ENCODE measurements at regions of chr4 and their contacts with region 1.

Region 1: GRCh38 chr4:169757575-169758184 is at the start of gene HPF1:
- DNase-seq: peak; percentile 85
- ATAC-seq: peak; percentile 95
- H3K4me3 Mint-ChIP-seq: peak within 1 kb of the TSS; percentile 92
- H3K27ac Mint-ChIP-seq: peak within 1 kb of the TSS; percentile 68
- H3K4me1 Mint-ChIP-seq: peaks cover 23% of the 10 kb centered on the region
- H3K27me3 Mint-ChIP-seq: no peaks in the 10 kb centered on the region
- CTCF ChIP-seq: no peak
- total RNA-seq, gene HPF1: 17.9 and 19.5 TPM in 2 replicates

Region 2: DNA sequence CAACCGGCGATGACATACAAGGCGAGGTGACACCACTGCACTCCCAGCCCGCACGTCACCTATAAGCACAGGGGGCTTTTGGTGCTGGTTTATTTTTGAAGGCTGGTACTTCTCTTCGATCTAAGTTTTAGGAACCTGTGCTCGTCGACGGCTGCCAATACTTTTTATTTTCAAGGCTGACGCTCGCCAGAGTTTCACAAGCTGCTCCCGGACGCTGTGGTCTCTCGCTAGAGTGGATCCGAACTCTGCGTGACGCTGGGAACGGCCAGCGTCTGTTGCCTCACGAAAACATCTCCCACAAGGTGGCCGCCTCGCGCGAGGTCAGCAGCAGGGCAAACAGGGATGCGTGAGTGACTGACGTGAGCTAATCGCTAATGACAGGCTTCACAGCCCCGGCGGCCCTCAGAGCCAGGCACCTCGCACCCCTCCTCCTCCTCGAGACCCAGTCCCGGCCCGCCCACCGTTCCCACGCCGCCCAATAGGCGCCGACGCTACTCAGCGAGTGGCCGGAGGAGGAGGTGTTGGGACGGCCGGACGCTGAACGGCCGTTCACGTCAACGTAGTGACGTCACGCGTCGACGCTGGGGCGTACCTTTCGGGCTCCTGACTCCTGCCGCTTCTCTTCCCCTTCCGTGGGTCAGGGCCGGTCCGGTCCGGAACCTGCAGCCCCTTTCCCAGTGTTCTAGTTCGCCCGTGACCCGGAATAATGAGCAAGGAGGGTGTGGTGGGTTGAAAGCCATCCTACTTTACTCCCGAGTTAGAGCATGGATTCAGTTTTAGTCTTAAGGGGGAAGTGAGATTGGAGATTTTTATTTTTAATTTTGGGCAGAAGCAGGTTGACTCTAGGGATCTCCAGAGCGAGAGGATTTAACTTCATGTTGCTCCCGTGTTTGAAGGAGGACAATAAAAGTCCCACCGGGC is 137.5 kb before region 1 on chr4 and contains the start of gene CLCN3:
- CTCF ChIA-PET with region 1: no interaction called
- POLR2A ChIA-PET with region 1: interaction called, 5 read pairs
- intact Hi-C with region 1: loop called (anchors 1 kb)
- DNase-seq: peak; percentile 92
- ATAC-seq: peak; percentile 93
- H3K4me3 Mint-ChIP-seq: peak within 1 kb of the TSS; percentile 100
- H3K27ac Mint-ChIP-seq: peak within 1 kb of the TSS; percentile 99
- H3K4me1 Mint-ChIP-seq: peaks cover 41% of the 10 kb centered on the region
- H3K27me3 Mint-ChIP-seq: no peaks in the 10 kb centered on the region
- CTCF ChIP-seq: no peak
- total RNA-seq, gene CLCN3: 23.0 and 28.6 TPM in 2 replicates

Region 3: DNA sequence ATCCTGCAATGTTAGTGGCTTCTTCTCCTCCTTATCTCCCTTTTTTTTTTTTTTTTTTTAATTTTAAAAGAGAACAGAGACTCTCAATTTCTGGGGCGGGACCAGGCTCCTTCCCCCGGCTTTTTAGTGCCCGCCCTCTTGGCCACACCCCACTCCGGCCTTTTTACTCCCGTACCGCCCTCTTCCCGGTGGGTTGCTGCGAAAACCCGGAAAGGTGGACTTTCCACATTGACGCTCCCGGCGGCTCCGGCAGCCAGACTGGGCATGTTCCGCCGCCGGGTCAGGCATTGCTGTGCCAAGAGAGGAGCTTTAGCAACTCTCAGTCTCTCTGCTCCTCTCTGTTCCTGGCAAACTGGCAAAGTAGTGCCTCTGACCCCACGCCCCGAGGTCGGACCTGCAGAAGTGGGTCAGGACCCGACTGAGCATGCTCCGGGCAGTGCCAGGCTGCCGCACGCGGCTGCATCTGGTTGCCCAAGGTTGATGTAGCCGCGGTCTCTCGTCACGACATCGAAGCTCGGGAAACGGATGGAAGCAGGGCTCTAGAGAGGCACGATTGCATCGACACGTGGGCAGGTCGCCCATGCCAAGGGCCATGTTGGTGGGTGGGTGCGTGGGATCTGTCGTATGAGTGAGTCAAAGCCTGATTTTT is 269.6 kb after region 1 on chr4:
- CTCF ChIA-PET with region 1: no interaction called
- POLR2A ChIA-PET with region 1: no interaction called
- intact Hi-C with region 1: loop called (anchors 1 kb)
- DNase-seq: peak; percentile 86
- ATAC-seq: peak; percentile 76
- H3K4me3 Mint-ChIP-seq: peak overlapping the region; percentile 89
- H3K27ac Mint-ChIP-seq: peak overlapping the region; percentile 47
- H3K4me1 Mint-ChIP-seq: peaks cover 13% of the 10 kb centered on the region
- H3K27me3 Mint-ChIP-seq: peaks cover 21% of the 10 kb centered on the region
- CTCF ChIP-seq: no peak

Region 4: DNA sequence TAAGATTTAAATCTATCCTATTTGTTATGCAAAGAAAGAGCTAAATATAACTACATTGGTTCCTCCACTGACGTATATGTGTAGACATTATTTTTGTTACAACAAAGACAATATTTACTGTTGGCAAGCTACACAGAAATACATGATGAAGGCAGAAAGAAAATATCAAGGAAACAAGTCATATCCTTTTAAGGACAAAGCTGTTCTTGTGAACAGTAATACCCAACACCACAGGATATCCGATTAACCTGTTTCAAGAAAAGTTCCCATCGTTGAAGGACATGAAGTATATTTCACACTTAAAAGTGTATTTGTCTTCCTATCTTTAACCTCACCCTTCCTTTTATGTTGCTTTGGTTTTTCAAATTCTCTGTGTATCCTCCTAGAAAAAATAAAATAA is 567.9 kb after region 1 on chr4:
- CTCF ChIA-PET with region 1: no interaction called
- POLR2A ChIA-PET with region 1: no interaction called
- intact Hi-C with region 1: no loop called
- DNase-seq: no peak
- ATAC-seq: no peak
- H3K4me3 Mint-ChIP-seq: no peak overlapping the region
- H3K27ac Mint-ChIP-seq: no peak overlapping the region
- H3K4me1 Mint-ChIP-seq: no peaks in the 10 kb centered on the region
- H3K27me3 Mint-ChIP-seq: no peaks in the 10 kb centered on the region
- CTCF ChIP-seq: no peak

Measured in activated B cell treated with CpG ODN at 0.5 μM for 24 hours (primary cell).